ENCODE measurements at regions of chr17 and their contacts with region 1.

Region 1: DNA sequence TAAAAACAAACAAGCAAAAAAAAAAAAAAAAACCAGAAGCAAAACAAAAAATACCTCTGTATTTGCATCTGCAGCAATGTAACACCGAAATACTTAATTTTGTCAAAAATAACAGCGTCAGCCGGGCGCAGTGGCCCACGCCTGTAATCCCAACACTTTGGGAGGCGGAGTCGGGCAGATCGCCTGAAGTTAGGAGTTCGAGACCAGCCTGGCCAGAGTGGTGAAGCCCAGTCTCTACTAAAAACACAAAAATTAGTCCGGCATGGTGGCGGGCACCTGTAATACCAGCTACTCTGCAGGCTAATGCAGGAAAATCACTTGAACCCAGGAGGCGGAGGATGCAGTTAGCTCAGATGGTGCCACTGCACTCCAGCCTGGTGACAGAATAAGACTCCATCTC is 683.5 kb upstream of the CA10 start:
- DNase-seq: no peak
- H3K4me3 Mint-ChIP-seq: no peak overlapping the region
- H3K27ac Mint-ChIP-seq: no peak overlapping the region
- H3K4me1 Mint-ChIP-seq: no peaks in the 10 kb centered on the region
- H3K27me3 Mint-ChIP-seq: no peaks in the 10 kb centered on the region

Region 2: DNA sequence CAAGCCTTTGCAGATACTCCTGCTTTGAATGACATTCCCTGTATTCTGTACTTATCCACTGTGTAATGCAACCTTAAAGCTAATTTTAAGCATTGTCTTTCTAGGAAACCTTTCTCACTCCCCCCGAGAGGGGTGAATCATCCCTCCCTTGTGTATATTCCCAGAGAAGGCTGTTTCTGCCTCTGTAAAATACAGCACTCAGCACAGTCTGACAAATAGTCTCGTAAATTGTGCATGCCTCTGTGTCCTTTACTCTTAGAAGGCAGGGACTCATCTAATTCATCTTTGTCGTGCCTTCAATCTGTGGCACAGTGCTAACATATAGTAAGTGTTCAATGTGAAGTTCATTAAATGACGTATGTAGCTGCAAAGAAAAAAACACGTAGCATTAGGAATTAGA is 884.2 kb before region 1 on chr17:
- intact Hi-C with region 1: no loop called
- DNase-seq: no peak
- H3K4me3 Mint-ChIP-seq: no peak overlapping the region
- H3K27ac Mint-ChIP-seq: no peak overlapping the region
- H3K4me1 Mint-ChIP-seq: no peaks in the 10 kb centered on the region
- H3K27me3 Mint-ChIP-seq: no peaks in the 10 kb centered on the region

Region 3: DNA sequence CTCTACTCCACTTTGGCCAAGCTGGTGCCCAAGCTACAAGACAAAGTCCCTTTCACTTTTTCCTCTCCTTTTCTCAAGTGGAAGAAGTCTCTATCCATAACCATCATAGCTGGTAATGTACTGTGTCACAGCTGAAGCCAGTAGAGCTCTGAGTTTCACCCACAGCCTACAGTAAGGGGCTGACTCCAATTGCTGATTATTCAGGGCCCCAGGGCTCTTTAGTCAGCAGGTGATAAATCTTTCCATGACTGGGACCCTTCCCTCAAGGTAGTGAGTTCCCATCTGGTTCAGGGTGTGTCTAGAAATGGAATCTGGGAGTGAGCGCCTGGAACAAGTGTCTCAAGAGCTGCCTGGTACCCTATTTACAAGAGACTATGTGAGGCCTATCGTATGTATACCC is 247.5 kb before region 1 on chr17:
- intact Hi-C with region 1: no loop called
- DNase-seq: no peak
- H3K4me3 Mint-ChIP-seq: no peak overlapping the region
- H3K27ac Mint-ChIP-seq: no peak overlapping the region
- H3K4me1 Mint-ChIP-seq: no peaks in the 10 kb centered on the region
- H3K27me3 Mint-ChIP-seq: no peaks in the 10 kb centered on the region

Region 4: GRCh38 chr17:52965856-52966255 is 123.9 kb after region 1 on chr17:
- intact Hi-C with region 1: no loop called
- DNase-seq: no peak
- H3K4me3 Mint-ChIP-seq: no peak overlapping the region
- H3K27ac Mint-ChIP-seq: no peak overlapping the region
- H3K4me1 Mint-ChIP-seq: no peaks in the 10 kb centered on the region
- H3K27me3 Mint-ChIP-seq: no peaks in the 10 kb centered on the region

Region 5: DNA sequence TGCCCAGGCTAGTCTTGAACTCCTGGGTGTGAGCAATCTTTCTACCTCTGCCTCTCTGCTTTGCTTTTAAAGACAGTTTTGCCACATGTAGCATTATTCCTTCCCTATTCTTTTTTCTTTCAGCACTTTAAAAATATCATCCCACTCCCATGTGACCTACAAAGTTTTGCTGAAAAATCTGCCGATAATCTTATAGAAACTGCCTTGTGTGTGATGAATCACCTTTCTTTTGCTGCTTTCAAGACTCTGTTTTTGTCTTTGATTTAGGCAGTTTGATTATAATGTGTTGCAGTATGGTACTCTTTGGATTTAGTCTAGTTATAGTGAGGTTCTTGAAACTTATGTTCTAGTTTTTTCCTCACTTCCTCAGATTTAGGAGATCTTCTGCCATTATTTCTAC is 838.8 kb after region 1 on chr17:
- intact Hi-C with region 1: loop called (anchors 10 kb)
- DNase-seq: no peak
- H3K4me3 Mint-ChIP-seq: no peak overlapping the region
- H3K27ac Mint-ChIP-seq: no peak overlapping the region
- H3K4me1 Mint-ChIP-seq: no peaks in the 10 kb centered on the region
- H3K27me3 Mint-ChIP-seq: no peaks in the 10 kb centered on the region

Measured in activated T-helper 1 cell treated with anti-CD3 and anti-CD28 coated beads, Interleukin-12 subunit alpha, Interleukin-12 subunit beta, Interleukin-2, Interleukin-4 antibody, amounts not matched to agents 30 ng/mL and 10 ng/mL and 1 ng/mL, durations not matched to agents 14 hours and 24 hours and 36 hours (primary cell).